ENCODE measurements at regions of chr2 and their contacts with region 1.

Region 1: GRCh38 chr2:158745044-158745865 is 49.9 kb upstream of the DAPL1 start:
- DNase-seq: peak; percentile 35
- ATAC-seq: peak; percentile 87
- H3K4me3 ChIP-seq: no peak overlapping the region
- H3K27ac ChIP-seq: no peak overlapping the region
- H3K4me1 ChIP-seq: no peaks in the 10 kb centered on the region
- H3K27me3 ChIP-seq: peaks cover 27% of the 10 kb centered on the region
- CTCF ChIP-seq: peak; percentile 65 to 71 (median 69)
- POLR2A ChIP-seq: no peak
- RAD21 ChIP-seq: peak; percentile 83

Region 2: DNA sequence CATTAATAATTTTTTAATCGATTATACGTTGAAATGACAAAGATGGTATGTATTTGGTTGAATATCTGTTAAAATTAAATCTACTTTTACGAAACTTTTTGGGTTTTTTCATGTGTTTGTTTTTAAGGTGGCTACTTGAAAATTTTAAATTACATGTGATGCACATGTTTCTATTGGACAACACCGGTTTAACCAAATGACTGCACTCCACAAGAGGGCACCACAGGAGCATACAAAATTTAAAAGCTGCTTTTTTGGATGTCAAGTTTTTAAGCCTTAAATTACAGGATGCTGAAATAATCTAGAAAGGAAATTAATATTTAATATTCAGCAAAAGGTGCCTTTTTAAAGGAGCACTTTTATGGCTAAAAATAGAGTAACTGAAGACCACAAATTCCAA is 967.8 kb before region 1 on chr2:
- CTCF ChIA-PET with region 1: no interaction called
- POLR2A ChIA-PET with region 1: no interaction called
- RAD21 ChIA-PET with region 1: no interaction called
- intact Hi-C with region 1: loop called (anchors 10 kb)
- DNase-seq: peak; percentile 28
- ATAC-seq: 0 out of 2 replicates have a peak, but pooled peaks have one; percentile 40
- H3K4me3 ChIP-seq: no peak overlapping the region
- H3K27ac ChIP-seq: no peak overlapping the region
- H3K4me1 ChIP-seq: no peaks in the 10 kb centered on the region
- H3K27me3 ChIP-seq: no peaks in the 10 kb centered on the region
- CTCF ChIP-seq: peak; percentile 60 to 79 (median 72); a peak in 5 of 6 replicates
- POLR2A ChIP-seq: no peak
- RAD21 ChIP-seq: peak; percentile 85

Region 3: GRCh38 chr2:158024288-158024898 is 720.9 kb before region 1 on chr2:
- CTCF ChIA-PET with region 1: interaction called, 62 read pairs
- POLR2A ChIA-PET with region 1: interaction called, 3 read pairs
- RAD21 ChIA-PET with region 1: interaction called, 3 to 9 read pairs
- intact Hi-C with region 1: loop called (anchors 1 kb)
- DNase-seq: no peak
- ATAC-seq: peak; percentile 84
- H3K4me3 ChIP-seq: no peak overlapping the region
- H3K27ac ChIP-seq: no peak overlapping the region
- H3K4me1 ChIP-seq: no peaks in the 10 kb centered on the region
- H3K27me3 ChIP-seq: no peaks in the 10 kb centered on the region
- CTCF ChIP-seq: peak; percentile 75 to 91 (median 75)
- POLR2A ChIP-seq: no peak
- RAD21 ChIP-seq: peak; percentile 79

Region 4: DNA sequence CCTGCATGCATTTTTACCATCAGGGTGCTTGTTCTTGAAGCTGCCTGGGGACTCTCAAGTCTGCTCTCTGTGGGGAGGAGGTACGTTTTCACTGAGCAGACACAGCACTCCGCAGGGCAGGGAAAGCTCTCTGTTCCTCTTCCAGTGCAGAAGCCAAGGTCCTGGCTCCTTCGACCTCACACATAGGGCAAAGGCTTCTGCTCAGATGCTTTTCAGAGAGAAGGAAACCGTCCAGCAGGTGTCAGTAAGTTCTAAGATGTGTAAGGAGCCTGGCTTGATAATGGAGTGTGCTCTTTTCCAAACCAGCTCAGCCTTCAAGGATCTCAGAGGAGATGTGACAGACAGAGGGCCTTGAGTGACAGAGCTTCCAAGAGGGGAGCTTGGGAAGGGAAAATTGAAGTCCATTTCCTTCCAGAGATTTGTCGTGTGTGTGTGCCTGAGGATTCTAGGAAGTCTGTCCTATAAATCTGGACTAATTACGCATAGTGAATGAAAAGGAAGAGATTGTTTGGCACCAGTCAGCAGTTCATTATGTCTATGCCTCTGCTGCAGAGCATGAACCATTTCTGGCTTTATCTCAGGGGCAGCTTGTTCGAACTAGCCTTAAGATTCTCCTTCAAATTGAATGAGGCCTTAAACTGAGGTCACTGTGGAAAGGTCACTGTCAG is 710.9 kb before region 1 on chr2:
- CTCF ChIA-PET with region 1: interaction called, 43 read pairs
- POLR2A ChIA-PET with region 1: no interaction called
- RAD21 ChIA-PET with region 1: interaction called, 4 to 6 read pairs
- intact Hi-C with region 1: loop called (anchors 1 kb)
- DNase-seq: peak; percentile 53
- ATAC-seq: peak; percentile 97
- H3K4me3 ChIP-seq: no peak overlapping the region
- H3K27ac ChIP-seq: no peak overlapping the region
- H3K4me1 ChIP-seq: no peaks in the 10 kb centered on the region
- H3K27me3 ChIP-seq: no peaks in the 10 kb centered on the region
- CTCF ChIP-seq: peak; percentile 59 to 70 (median 60)
- POLR2A ChIP-seq: no peak
- RAD21 ChIP-seq: peak; percentile 84

Region 5: GRCh38 chr2:158179660-158180059 is 565.6 kb before region 1 on chr2:
- CTCF ChIA-PET with region 1: interaction called, 31 read pairs
- POLR2A ChIA-PET with region 1: no interaction called
- RAD21 ChIA-PET with region 1: interaction called, 4 to 9 read pairs
- intact Hi-C with region 1: loop called (anchors 1 kb)
- DNase-seq: peak; percentile 13
- ATAC-seq: peak; percentile 55
- H3K4me3 ChIP-seq: no peak overlapping the region
- H3K27ac ChIP-seq: no peak overlapping the region
- H3K4me1 ChIP-seq: no peaks in the 10 kb centered on the region
- H3K27me3 ChIP-seq: no peaks in the 10 kb centered on the region
- CTCF ChIP-seq: peak; percentile 18 to 44 (median 44); a peak in 3 of 6 replicates
- POLR2A ChIP-seq: no peak
- RAD21 ChIP-seq: peak; percentile 75

Region 6: DNA sequence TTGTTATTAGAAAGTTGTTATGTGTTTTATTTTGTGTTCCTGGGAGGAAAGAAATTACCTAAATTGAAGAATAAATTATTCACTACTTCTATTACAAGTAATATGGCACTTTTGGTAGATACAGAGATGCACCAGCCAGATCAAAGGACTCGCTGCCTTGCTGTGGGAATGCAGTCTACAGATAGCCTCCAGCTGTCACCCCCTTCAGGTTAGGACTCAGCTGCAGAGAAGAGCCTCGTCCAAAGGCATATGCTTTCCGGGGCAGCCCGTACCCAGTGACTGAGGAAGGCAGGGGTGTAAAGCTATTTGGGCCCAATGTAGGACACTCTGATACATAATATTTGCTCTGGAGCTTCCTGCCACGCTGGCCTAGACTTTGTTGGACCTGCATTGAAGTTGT is 378.9 kb before region 1 on chr2:
- CTCF ChIA-PET with region 1: no interaction called
- POLR2A ChIA-PET with region 1: no interaction called
- RAD21 ChIA-PET with region 1: no interaction called
- intact Hi-C with region 1: no loop called
- DNase-seq: no peak
- ATAC-seq: no peak
- H3K4me3 ChIP-seq: no peak overlapping the region
- H3K27ac ChIP-seq: no peak overlapping the region
- H3K4me1 ChIP-seq: no peaks in the 10 kb centered on the region
- H3K27me3 ChIP-seq: no peaks in the 10 kb centered on the region
- CTCF ChIP-seq: no peak
- POLR2A ChIP-seq: no peak
- RAD21 ChIP-seq: no peak

Region 7: GRCh38 chr2:158561054-158561453 is 184.2 kb before region 1 on chr2:
- CTCF ChIA-PET with region 1: no interaction called
- POLR2A ChIA-PET with region 1: no interaction called
- RAD21 ChIA-PET with region 1: no interaction called
- intact Hi-C with region 1: no loop called
- DNase-seq: no peak
- ATAC-seq: no peak
- H3K4me3 ChIP-seq: no peak overlapping the region
- H3K27ac ChIP-seq: no peak overlapping the region
- H3K4me1 ChIP-seq: no peaks in the 10 kb centered on the region
- H3K27me3 ChIP-seq: no peaks in the 10 kb centered on the region
- CTCF ChIP-seq: no peak
- POLR2A ChIP-seq: no peak
- RAD21 ChIP-seq: no peak